Activated naive CD8-positive, alpha-beta T cell treated with anti-CD3 and anti-CD28 coated beads, Interleukin-2, amount 10 ng/mL, durations not matched to agents 7 days and 5 days (primary cell): ENCODE measurements at regions of chr11 and their contacts with region 1.

Region 1: DNA sequence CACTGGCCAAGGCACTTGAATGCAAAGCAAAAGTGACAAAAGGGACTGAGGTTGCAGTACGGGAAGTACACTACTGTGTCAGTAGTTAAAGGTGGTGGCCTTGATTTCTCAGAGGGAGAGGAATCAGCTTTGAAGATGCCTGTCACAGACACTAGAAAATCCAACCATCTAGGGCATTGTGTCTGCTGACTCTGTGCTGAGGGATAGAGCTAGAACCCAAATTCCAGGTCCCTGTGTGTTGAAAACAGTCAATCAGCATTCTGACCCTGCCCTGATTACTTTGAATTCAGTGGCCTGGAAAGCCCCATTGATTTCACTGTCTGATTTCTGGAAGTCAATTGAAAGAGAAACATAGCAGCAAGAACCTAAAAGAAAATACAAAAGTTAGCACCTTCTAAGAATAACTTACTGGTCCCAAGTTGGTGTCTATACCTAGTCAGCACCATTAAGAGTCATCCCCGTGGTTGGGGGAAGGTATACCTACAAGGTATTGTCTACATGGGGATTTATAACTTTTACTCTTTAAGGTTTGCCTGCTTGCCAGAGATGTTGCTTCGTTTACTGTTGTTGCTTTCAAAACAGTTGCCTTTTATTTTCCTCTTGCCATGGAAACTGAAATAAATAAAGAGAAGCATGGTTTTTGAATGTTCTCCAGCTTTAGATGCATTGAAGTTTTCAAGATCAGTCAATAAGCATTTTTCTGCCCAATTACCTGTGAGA is 97.3 kb downstream of the PDHX start:
- DNase-seq: no peak
- ATAC-seq: peak; percentile 15
- H3K4me3 Mint-ChIP-seq: peak overlapping the region; percentile 62
- H3K27ac Mint-ChIP-seq: peak overlapping the region; percentile 50
- H3K4me1 Mint-ChIP-seq: peaks cover 30% of the 10 kb centered on the region
- H3K27me3 Mint-ChIP-seq: peaks cover 8% of the 10 kb centered on the region

Region 2: DNA sequence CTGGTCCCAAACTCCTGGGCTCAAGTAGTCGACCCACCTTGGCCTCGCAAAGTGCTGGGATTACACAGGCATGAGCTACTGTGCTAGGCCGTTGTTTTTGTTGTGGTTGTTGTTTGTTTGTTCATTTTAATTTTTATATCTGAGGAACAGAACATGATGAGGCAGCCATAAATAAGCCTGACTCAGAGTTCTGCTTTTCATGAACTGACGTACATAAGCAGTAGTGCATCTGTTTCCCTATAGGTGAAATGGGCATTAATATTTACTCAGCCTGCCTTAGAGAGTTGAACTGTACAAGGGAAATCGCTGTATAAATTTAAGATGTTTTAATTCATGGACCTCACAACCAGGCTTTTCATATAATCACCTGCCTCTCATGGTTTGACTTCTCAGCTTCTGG is 16.7 kb before region 1 on chr11:
- POLR2A ChIA-PET with region 1: no interaction called
- DNase-seq: no peak
- ATAC-seq: no peak
- H3K4me3 Mint-ChIP-seq: no peak overlapping the region
- H3K27ac Mint-ChIP-seq: no peak overlapping the region
- H3K4me1 Mint-ChIP-seq: peaks cover 15% of the 10 kb centered on the region
- H3K27me3 Mint-ChIP-seq: no peaks in the 10 kb centered on the region

Region 3: DNA sequence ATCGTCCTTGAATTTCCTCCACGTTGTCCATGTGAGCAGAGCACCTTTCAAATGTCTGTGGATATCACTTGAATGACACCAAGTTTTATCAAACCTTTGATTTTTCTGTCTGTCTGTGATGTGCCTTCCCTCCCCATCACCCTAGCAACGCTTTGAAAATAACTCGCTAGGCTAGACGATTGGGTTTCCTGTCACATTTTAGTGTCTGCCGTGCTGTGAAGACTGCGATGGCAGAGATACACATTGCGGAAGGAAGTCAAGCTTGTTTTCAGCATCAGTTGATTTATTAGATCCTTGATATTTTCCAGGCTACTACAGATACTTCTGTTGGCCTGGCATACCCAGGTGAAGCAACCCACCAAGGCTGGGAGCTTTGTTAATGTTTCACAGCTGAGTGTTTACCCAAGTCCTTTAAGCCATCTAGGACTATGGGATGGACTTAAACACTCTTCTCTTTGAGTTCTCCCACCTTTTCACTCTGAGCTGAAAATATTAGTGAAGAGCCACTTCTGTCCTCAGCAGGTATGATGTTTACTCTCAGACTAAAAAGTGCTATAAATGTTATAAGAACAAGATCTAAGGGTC is 31.7 kb after region 1 on chr11:
- POLR2A ChIA-PET with region 1: interaction called, 10 read pairs
- DNase-seq: peak; percentile 42
- ATAC-seq: peak; percentile 81
- H3K4me3 Mint-ChIP-seq: peak overlapping the region; percentile 86
- H3K27ac Mint-ChIP-seq: peak overlapping the region; percentile 90
- H3K4me1 Mint-ChIP-seq: peaks cover 55% of the 10 kb centered on the region
- H3K27me3 Mint-ChIP-seq: no peaks in the 10 kb centered on the region